CD4-positive, alpha-beta memory T cell (primary cell): ENCODE measurements at regions of chr20 and their contacts with region 1.

Region 1: GRCh38 chr20:58659841-58660240 is 8.8 kb downstream of the STX16 start:
- DNase-seq: peak in 1 of 5 donors; percentile 12
- H3K4me3 ChIP-seq: peak overlapping the region in 1 of 2 donors; percentile 7
- H3K4me3 Mint-ChIP-seq: peak overlapping the region; percentile 75 to 95 (median 84)
- H3K27ac ChIP-seq: peak overlapping the region; percentile 80
- H3K27ac Mint-ChIP-seq: peak overlapping the region; percentile 95 to 100 (median 97)
- H3K4me1 ChIP-seq: peaks cover 95% of the 10 kb centered on the region
- H3K4me1 Mint-ChIP-seq: peaks cover 62 to 91% (median 76%) of the 10 kb centered on the region in 4 donors
- H3K27me3 ChIP-seq: no peaks in the 10 kb centered on the region
- H3K27me3 Mint-ChIP-seq: no peaks in the 10 kb centered on the region

Region 2: DNA sequence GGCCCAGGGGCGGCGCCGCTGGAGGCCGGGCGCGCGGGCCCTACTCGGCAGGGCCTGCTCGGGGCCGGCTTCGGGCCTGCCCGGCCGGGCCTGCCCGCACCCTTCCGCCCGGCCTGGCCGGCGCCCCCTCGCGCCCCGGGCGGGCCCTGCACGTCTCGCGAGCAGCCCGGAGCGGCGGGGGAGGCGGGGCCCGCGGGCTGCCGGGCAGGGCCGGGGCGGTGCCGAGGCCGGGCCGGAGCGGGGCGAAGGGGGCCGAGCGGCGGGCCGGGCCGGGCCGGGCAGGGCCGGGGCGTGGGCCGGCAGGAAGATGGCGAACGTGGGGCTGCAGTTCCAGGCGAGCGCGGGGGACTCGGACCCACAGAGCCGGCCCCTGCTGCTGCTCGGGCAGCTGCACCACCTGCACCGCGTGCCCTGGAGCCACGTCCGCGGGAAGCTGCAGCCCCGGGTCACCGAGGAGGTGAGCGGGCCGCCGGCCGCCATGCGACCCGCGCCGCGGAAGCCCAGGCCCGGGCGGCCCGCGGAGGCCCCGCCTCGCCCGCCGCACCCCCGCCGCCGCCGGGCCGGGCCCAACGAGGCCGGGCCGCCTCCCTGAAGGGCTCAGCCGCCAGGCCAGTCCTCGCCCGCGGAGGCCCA is 32.9 kb after region 1 on chr20 and contains the start of gene NPEPL1:
- CTCF ChIA-PET with region 1: interaction called, 5 read pairs
- POLR2A ChIA-PET with region 1: interaction called, 25 read pairs
- intact Hi-C with region 1: no loop called
- DNase-seq: peak in 4 of 5 donors; percentile 60 to 75 (median 66)
- H3K4me3 ChIP-seq: peak within 1 kb of the TSS in 1 of 2 donors; percentile 36
- H3K4me3 Mint-ChIP-seq: peak within 1 kb of the TSS; percentile 77 to 85 (median 81)
- H3K27ac ChIP-seq: peak within 1 kb of the TSS; percentile 52
- H3K27ac Mint-ChIP-seq: peak within 1 kb of the TSS; percentile 79 to 90 (median 85)
- H3K4me1 ChIP-seq: peaks cover 16% of the 10 kb centered on the region
- H3K4me1 Mint-ChIP-seq: peaks cover 6 to 17% (median 13%) of the 10 kb centered on the region in 4 donors
- H3K27me3 ChIP-seq: no peaks in the 10 kb centered on the region
- H3K27me3 Mint-ChIP-seq: no peaks in the 10 kb centered on the region
- total RNA-seq, gene NPEPL1: 44.2 to 44.8 TPM

Region 3: GRCh38 chr20:58703264-58703663 is 43.4 kb after region 1 on chr20:
- CTCF ChIA-PET with region 1: no interaction called
- POLR2A ChIA-PET with region 1: no interaction called
- intact Hi-C with region 1: no loop called
- DNase-seq: no peak
- H3K4me3 ChIP-seq: no peak overlapping the region
- H3K4me3 Mint-ChIP-seq: no peak overlapping the region
- H3K27ac ChIP-seq: no peak overlapping the region
- H3K27ac Mint-ChIP-seq: no peak overlapping the region
- H3K4me1 ChIP-seq: no peaks in the 10 kb centered on the region
- H3K4me1 Mint-ChIP-seq: peaks cover 0 to 2% (median 0%) of the 10 kb centered on the region in 4 donors
- H3K27me3 ChIP-seq: no peaks in the 10 kb centered on the region
- H3K27me3 Mint-ChIP-seq: no peaks in the 10 kb centered on the region